Posterior cingulate gyrus (tissue), 11 donors: ENCODE measurements at regions of chr4 and their contacts with region 1.

Region 1: DNA sequence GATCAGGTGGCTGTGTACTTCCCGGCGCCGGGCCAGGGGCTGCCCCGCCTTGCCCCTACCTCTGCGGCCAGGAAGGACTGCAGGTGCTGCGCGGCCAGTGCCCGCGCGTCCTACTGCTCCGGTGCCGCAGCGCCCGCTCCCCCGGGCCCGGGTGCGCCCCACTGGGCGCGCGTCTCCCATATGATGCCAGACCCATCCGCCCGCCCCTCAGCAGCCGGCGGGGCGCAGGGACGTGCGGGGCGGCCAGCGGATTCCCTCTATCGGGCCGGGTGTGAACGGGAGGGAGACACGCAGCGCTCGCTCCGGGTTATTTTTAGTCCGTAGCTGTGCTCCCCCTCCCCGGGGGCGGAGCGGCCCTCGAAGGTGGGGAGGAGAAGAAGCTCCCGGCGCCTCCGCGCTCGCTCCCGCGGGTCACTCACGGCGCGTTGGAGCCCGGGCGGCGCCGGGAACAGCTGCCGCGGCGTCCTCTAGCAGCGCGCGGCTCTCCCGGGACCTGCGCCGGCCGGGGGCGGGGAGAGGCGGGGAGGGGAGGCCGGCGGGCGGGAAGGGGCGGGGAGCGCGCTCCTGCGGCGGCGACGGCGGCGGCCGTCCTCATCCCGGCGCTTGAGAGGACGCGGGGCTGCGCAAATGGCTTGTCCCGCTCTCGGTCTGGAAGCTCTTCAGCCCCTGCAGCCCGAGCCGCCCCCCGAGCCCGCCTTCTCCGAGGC is 103.6 kb downstream of the UCHL1 start:
- DNase-seq: peak; percentile 61 to 97 (median 81)

Region 2: DNA sequence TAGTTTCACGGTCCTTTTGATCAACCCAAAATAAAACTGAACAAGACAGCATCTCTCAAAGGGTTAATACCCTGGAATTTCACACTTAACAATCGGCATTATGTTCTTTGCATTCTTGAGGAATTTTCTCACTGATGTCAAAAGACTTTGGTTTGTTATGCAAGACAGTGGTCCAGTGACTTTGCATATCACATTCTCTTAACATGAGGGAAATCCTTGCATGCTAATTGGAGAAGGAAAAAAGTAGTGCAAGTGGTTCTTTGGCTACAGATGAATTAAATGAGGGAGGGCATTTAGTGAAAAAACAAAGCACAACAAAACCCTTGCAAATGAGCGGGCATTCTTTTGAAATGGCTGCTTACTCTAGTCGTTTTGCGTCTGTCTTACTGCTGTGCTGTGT is 72.5 kb after region 1 on chr4:
- intact Hi-C with region 1: loop called (anchors 5 kb)
- DNase-seq: no peak

Region 3: GRCh38 chr4:41505161-41505661 is 144.8 kb after region 1 on chr4:
- intact Hi-C with region 1: loop called (anchors 10 kb)
- DNase-seq: peak in 1 of 10 donors; percentile 31

Region 4: GRCh38 chr4:41611881-41612871 is 251.8 kb after region 1 on chr4:
- intact Hi-C with region 1: loop called (anchors 1 kb)
- DNase-seq: peak; percentile 72 to 96 (median 78)